ENCODE measurements at regions of chr5 and their contacts with region 1.

Region 1: DNA sequence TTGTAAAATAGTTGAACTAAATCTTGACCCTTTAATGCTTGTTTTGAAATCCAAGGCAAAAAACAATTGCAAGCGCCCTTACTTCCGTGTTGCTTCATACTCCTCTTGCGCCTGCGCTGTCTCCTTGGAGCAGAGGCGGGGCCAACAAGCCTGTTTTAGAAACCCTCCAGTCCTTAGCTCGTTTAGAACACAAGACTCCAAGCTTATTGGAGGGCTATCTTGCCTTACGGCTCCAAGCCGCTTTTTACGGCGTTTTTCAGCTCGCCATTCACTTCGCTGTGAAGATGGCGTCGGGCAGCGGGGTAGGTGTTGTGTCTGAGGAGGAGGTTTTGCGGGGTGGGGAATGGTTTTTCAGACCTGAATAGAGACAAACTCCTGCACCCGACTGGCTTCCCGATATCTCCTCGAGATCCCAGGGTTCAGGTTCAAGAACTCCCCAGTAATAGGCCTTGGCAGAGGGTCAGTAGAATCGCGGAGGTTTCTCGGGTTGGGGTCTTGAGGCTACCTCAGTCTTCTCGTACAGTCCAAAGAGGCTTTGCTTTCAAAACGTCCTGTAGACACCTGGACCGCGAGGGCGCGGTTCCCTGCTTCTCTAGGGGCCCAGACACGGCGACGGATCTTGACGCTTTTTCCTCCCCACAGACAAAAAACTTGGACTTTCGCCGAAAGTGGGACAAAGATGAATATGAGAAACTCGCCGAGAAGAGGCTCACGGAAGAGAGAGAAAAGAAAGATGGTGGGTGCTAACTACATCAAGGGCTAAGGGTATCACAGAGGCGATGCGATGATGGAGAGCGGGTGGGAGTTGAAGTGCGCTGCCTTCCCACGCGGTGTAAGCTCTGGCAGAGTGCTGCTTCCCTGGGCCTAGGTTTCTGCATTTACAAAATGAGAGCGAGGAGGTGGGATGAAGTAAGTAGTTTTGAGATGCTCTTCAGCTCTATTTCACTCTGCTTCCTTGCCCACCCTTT is at the start of gene ZMAT2:
- H3K4me3 Mint-ChIP-seq: peak within 1 kb of the TSS; percentile 97
- H3K27ac Mint-ChIP-seq: peak within 1 kb of the TSS; percentile 94
- H3K4me1 Mint-ChIP-seq: peaks cover 28% of the 10 kb centered on the region
- H3K27me3 Mint-ChIP-seq: no peaks in the 10 kb centered on the region

Region 2: DNA sequence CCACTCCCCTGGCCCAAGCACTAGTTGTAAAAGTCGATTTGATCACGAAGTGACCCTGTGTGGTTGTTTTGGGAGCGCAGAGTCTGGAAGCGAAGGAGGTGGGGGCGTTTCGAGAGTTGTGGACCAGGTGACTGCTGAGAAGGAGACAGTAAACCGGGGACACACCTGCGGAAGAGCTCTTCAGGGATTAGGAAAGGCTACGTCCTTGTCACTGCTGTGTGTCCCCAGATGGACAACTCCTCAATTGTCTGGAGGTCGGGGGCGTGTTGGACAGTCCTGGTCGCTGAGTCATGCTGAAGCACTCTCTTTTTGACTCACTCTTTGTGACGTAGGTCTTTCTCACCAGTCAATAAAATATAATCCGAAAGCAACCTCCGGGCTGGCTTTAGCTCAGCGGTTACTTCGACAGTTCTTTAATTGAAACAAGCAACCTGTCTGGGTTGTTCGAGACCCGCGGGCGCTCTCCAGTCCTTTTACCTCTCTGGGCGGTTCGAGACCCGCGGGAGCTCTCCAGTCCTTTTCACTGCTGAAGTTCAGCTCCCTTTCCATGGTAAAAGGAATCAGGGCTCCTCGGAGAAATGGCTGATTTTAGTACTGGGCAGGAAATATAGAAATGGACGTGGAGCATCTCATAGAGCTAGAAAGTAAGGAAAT is 10.6 kb after region 1 on chr5:
- intact Hi-C with region 1: loop called (anchors 1 kb)
- H3K4me3 Mint-ChIP-seq: peak overlapping the region; percentile 87
- H3K27ac Mint-ChIP-seq: peak overlapping the region; percentile 95
- H3K4me1 Mint-ChIP-seq: peaks cover 33% of the 10 kb centered on the region
- H3K27me3 Mint-ChIP-seq: no peaks in the 10 kb centered on the region

Region 3: GRCh38 chr5:140741967-140742366 is 41.5 kb after region 1 on chr5:
- intact Hi-C with region 1: no loop called
- H3K4me3 Mint-ChIP-seq: no peak overlapping the region
- H3K27ac Mint-ChIP-seq: no peak overlapping the region
- H3K4me1 Mint-ChIP-seq: no peaks in the 10 kb centered on the region
- H3K27me3 Mint-ChIP-seq: no peaks in the 10 kb centered on the region

Region 4: GRCh38 chr5:141094481-141095262 is 394.2 kb after region 1 on chr5 and contains the start of gene PCDHB2:
- intact Hi-C with region 1: no loop called
- H3K4me3 Mint-ChIP-seq: no peak within 1 kb of the TSS
- H3K27ac Mint-ChIP-seq: no peak within 1 kb of the TSS
- H3K4me1 Mint-ChIP-seq: no peaks in the 10 kb centered on the region
- H3K27me3 Mint-ChIP-seq: peaks cover 21% of the 10 kb centered on the region

Measured in dendritic cell treated with granulocyte-macrophage colony-stimulating factor and Interleukin-4, amounts not matched to agents 40 ng/mL and 50 ng/mL, for 4 days (primary cell).